OCI-LY7 (cell line): ENCODE measurements at regions of chr12 and their contacts with region 1.

Region 1: GRCh38 chr12:674272-674781 is 11.1 kb upstream of the NINJ2 start:
- DNase-seq: peak; percentile 71
- H3K4me3 ChIP-seq: peak overlapping the region; percentile 47
- H3K27ac ChIP-seq: peak overlapping the region; percentile 82
- H3K4me1 ChIP-seq: peaks cover 56% of the 10 kb centered on the region
- CTCF ChIP-seq: no peak

Region 2: GRCh38 chr12:575948-576612 is 98.2 kb before region 1 on chr12:
- CTCF ChIA-PET with region 1: no interaction called
- POLR2A ChIA-PET with region 1: interaction called, 7 read pairs
- intact Hi-C with region 1: loop called (anchors 10 kb)
- DNase-seq: peak; percentile 87
- H3K4me3 ChIP-seq: no peak overlapping the region
- H3K27ac ChIP-seq: no peak overlapping the region
- H3K4me1 ChIP-seq: peaks cover 13% of the 10 kb centered on the region
- CTCF ChIP-seq: peak; percentile 98

Region 3: DNA sequence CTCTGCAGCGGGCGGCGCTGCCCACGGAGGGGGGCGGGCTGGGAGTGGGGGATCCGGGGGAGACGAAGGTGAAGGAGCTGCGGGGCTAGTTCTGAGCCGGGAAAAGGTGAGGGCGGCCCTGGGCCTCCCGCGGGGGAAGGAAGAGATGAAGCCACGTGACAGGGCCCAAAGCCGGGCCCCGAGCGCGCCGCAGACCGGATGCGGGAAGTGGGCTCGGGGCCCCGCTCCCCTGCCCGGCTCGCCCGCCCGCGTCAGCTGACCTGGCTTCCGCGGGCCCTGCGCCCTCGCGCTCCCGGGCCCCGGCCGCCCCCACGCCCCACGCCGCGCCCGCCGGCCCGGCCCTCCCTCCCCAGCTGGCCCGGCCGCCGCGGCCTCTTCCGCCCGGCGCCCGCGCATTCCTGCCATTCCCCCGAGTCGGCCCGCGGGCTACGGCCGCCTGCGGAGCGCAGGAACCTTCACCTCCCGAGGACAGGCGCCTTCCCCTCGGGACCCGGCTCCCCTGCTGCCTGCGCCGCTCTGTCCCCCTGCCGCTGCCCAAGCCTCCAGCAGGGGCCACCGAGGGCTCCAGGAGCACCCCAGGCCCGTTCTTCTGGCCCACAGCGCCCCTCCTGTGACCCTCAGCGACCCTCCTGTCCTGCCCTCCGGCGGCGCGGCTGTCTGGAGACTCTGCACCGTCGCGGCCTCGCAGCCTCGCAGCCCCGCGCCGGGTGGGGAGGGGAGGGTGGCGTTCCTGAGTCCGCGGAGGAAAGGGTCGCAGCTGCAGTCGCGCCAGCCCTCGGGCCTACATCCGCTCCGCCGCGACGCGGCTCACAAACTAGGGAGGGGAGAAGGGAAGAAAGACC is 31.5 kb before region 1 on chr12:
- CTCF ChIA-PET with region 1: no interaction called
- POLR2A ChIA-PET with region 1: interaction called, 7 read pairs
- intact Hi-C with region 1: loop called (anchors 2 kb)
- DNase-seq: peak; percentile 87
- H3K4me3 ChIP-seq: peak overlapping the region; percentile 71
- H3K27ac ChIP-seq: peak overlapping the region; percentile 69
- H3K4me1 ChIP-seq: peaks cover 41% of the 10 kb centered on the region
- CTCF ChIP-seq: peak; percentile 46

Region 4: DNA sequence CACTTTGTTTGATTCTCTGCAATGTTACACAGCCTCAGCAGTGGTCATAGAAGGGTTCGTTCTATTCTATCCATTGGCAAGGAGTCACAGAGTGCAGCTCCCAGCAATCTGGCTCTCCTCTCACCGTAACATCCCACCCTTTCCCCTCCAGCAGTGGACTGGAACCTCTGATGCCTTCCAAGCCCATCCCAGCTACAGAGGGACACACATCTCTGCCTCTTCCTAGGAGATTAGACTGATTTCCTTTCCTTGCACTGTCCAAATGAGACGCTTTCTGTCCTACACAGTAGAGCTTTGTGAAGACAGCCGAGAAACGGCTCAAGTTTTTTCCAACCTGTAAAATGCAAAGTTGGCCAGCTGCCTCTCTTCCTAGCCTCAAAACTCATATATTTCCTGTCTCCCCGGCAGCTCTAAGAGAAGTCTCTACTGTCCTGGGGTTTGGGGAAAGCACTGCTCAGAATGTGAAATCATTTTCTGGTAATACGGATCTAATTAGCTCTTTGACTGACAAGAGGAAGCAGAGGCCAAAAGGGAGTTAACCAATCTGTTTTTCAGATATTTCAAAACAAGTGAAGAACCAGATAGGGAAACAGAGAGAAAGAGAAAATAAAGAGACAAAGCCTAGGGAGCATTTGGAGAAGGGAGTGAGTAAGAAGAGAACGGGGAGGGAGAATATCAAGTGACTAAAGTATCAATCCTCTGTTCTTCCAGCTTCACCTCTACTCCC is 11.6 kb before region 1 on chr12:
- CTCF ChIA-PET with region 1: interaction called, 3 read pairs
- POLR2A ChIA-PET with region 1: interaction called, 19 read pairs
- intact Hi-C with region 1: no loop called
- DNase-seq: no peak
- H3K4me3 ChIP-seq: peak overlapping the region; percentile 21
- H3K27ac ChIP-seq: peak overlapping the region; percentile 46
- H3K4me1 ChIP-seq: peaks cover 90% of the 10 kb centered on the region
- CTCF ChIP-seq: no peak

Region 5: GRCh38 chr12:685388-685787 is 11.1 kb after region 1 on chr12:
- CTCF ChIA-PET with region 1: no interaction called
- POLR2A ChIA-PET with region 1: interaction called, 42 read pairs
- intact Hi-C with region 1: no loop called
- DNase-seq: peak; percentile 84
- H3K4me3 ChIP-seq: peak overlapping the region; percentile 24
- H3K27ac ChIP-seq: peak overlapping the region; percentile 76
- H3K4me1 ChIP-seq: peaks cover 40% of the 10 kb centered on the region
- CTCF ChIP-seq: no peak

Region 6: GRCh38 chr12:718756-719102 is 44.4 kb after region 1 on chr12:
- CTCF ChIA-PET with region 1: no interaction called
- POLR2A ChIA-PET with region 1: interaction called, 9 read pairs
- intact Hi-C with region 1: loop called (anchors 2 kb)
- DNase-seq: peak; percentile 52
- H3K4me3 ChIP-seq: peak overlapping the region; percentile 54
- H3K27ac ChIP-seq: peak overlapping the region; percentile 46
- H3K4me1 ChIP-seq: peaks cover 34% of the 10 kb centered on the region
- CTCF ChIP-seq: no peak